ENCODE measurements at regions of chr3 and their contacts with region 1.

Region 1: DNA sequence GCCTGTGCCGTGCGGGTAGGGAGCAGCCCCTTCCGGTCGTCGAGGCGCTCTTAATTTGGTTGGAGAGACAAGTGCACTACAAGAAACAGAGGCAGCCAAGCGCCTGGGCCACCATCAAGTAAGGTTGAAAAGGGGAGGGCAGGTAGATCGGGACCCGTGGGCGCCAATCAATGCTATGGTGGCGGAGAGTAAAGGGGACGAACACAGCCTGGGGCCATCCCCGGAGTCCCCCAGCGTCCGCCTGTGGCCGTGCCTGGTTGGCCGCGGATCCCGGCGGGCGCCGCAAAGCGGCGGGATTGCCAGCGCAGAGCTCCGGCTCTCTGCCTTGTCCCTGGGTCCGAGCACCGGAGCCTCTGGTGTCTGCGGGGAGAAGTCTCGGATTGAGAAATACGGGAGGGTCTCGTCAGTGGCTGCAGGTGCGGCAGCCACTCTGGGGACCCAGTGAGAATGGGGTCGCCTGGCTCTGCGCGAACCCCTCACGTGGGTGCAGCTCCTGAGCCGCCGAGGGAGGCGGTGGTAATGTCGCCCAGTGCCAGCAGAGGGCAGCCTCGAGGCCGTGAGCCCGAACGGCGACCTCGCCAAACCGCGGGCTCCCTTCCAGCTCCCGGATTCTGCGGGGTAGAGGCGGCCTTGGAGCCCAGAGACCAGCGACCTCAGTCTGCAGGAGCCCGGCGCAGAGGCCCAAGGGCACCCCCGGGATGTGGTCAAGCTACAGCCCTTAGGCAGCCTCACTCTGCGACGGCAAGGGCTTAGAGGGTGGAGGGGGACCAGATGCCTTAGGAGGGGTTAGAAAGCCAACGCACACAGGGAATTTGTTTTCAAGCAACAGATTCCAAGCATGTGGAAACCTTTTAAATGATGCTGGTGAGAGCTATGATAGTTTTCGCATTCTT is 10.8 kb downstream of the FOXL2 start:
- DNase-seq: peak; percentile 51
- H3K4me3 Mint-ChIP-seq: peak overlapping the region; percentile 62
- H3K27ac Mint-ChIP-seq: peak overlapping the region; percentile 68
- H3K4me1 Mint-ChIP-seq: peaks cover 15% of the 10 kb centered on the region
- H3K27me3 Mint-ChIP-seq: peaks cover 62% of the 10 kb centered on the region

Region 2: GRCh38 chr3:138950006-138950644 is 14.0 kb after region 1 on chr3:
- intact Hi-C with region 1: loop called (anchors 2 kb)
- DNase-seq: no peak
- H3K4me3 Mint-ChIP-seq: no peak overlapping the region
- H3K27ac Mint-ChIP-seq: no peak overlapping the region
- H3K4me1 Mint-ChIP-seq: peaks cover 3% of the 10 kb centered on the region
- H3K27me3 Mint-ChIP-seq: peaks cover 67% of the 10 kb centered on the region

Region 3: DNA sequence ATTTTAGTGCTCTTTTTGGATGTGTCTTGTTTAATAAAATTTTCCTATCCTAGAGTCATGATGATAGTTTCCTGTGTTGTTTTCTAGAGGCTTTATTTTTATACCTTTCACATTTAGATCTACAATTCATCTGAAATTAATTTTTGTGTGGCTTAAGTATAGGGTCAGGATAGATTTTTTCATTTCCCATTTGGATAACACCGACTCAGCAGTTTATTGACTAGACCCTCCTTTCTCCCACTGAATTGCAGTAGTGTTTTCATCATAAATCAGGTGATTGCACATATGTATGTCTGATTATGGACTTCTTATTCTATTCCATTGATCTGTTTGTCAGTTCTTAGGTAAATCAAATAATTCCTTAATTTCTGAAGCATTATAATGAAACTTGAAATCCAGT is 59.6 kb after region 1 on chr3:
- intact Hi-C with region 1: no loop called
- DNase-seq: no peak
- H3K4me3 Mint-ChIP-seq: no peak overlapping the region
- H3K27ac Mint-ChIP-seq: no peak overlapping the region
- H3K4me1 Mint-ChIP-seq: no peaks in the 10 kb centered on the region
- H3K27me3 Mint-ChIP-seq: peaks cover 5% of the 10 kb centered on the region

Measured in activated T-helper 1 cell treated with anti-CD3 and anti-CD28 coated beads, Interleukin-12 subunit alpha, Interleukin-12 subunit beta, Interleukin-2, Interleukin-4 antibody, amounts not matched to agents 30 ng/mL and 10 ng/mL and 1 ng/mL, durations not matched to agents 14 hours and 24 hours and 36 hours (primary cell).